Posterior vena cava (tissue), 2 donors: ENCODE measurements at regions of chr10 and their contacts with region 1.

Region 1: DNA sequence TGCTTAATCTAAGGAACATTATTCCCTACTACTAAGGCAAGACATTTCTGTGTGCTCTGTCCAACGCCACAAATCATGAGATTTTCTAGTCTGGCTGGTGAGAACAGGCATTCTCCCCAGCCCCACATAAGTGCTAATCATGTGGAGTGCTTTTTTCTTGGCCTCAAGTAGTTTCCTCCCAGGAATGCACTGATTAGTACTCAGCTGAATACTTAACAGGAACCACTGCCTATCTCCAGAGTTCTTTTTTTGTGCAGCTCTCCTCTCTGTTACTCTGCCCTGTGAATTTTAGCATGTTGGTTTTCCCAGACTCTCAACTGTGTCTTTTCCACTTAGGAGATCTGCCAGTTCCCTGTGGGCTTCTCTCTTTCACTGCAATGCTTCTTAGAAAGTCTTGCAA is 1098.5 kb upstream of the LRRTM3 start:
- DNase-seq: no peak

Region 2: GRCh38 chr10:65838834-65839233 is 11.5 kb after region 1 on chr10:
- intact Hi-C with region 1: loop called in 1 of 2 experiments (anchors 1 kb)
- DNase-seq: no peak